ENCODE measurements at regions of chr10 and their contacts with region 1.

Region 1: DNA sequence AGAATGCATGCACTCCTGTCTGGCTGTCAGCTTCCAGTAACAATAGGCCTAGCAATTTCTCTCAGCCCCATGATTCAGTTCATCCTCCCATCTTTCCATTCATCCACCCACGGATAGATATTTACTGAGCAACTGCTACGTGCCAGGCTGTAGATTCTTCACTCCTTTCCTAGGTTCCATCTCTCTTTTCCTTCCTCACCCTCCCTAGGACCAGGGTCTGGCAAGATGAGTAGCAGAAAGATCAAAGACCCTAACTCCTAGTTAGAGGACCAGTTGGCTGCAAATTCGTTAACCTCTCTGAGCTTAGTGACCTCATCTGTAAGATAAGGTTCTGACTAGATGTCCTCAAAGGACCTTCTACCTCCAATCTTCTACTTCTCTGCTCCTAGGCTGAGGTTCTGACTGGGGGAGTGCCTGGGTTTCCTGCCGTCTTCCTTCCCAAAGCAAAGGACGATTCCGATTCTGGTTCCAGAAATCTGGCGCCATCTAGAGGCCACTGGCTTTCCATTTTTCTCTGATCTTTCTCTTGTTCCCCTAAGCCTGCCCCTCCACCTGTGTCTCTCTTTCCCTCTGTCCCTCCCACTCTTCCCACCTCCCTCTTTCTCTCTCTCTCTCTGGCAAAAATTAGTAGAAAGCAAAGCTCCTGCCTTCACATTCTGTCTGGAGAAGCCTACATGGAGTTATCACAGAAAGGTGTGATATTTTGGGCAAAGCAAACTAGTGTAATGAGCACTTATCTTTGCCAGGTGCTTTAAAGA is 26.2 kb downstream of the TBATA start:
- DNase-seq: peak; percentile 60
- ATAC-seq: peak; percentile 84
- H3K4me3 ChIP-seq: no peak overlapping the region
- H3K27ac ChIP-seq: no peak overlapping the region
- H3K4me1 ChIP-seq: peaks cover 23 to 53% of the 10 kb centered on the region in 2 experiments
- H3K27me3 ChIP-seq: no peaks in the 10 kb centered on the region
- CTCF ChIP-seq: peak; percentile 72 to 85 (median 76)
- POLR2A ChIP-seq: no peak
- RAD21 ChIP-seq: peak; percentile 93

Region 2: GRCh38 chr10:70549962-70550458 is 208.9 kb before region 1 on chr10:
- CTCF ChIA-PET with region 1: interaction called, 3 read pairs
- POLR2A ChIA-PET with region 1: no interaction called
- RAD21 ChIA-PET with region 1: interaction called in 1 of 2 experiments, 3 read pairs
- intact Hi-C with region 1: loop called (anchors 1 kb)
- DNase-seq: peak; percentile 42
- ATAC-seq: peak; percentile 89
- H3K4me3 ChIP-seq: no peak overlapping the region
- H3K27ac ChIP-seq: no peak overlapping the region
- H3K4me1 ChIP-seq: peaks cover 4 to 44% of the 10 kb centered on the region in 2 experiments; a peak in 3 of 4 replicates
- H3K27me3 ChIP-seq: no peaks in the 10 kb centered on the region
- CTCF ChIP-seq: peak; percentile 87 to 94 (median 89)
- POLR2A ChIP-seq: no peak
- RAD21 ChIP-seq: peak; percentile 97

Region 3: GRCh38 chr10:70558871-70559810 is 199.8 kb before region 1 on chr10:
- CTCF ChIA-PET with region 1: interaction called, 7 read pairs
- POLR2A ChIA-PET with region 1: no interaction called
- RAD21 ChIA-PET with region 1: no interaction called
- intact Hi-C with region 1: loop called (anchors 1 kb)
- DNase-seq: peak; percentile 65
- ATAC-seq: peak; percentile 92
- H3K4me3 ChIP-seq: peak overlapping the region; percentile 15 to 48
- H3K27ac ChIP-seq: peak overlapping the region; percentile 52
- H3K4me1 ChIP-seq: peaks cover 19 to 86% of the 10 kb centered on the region in 2 experiments
- H3K27me3 ChIP-seq: no peaks in the 10 kb centered on the region
- CTCF ChIP-seq: peak; percentile 51 to 90 (median 66)
- POLR2A ChIP-seq: no peak
- RAD21 ChIP-seq: peak; percentile 73

Region 4: GRCh38 chr10:70619271-70620019 is 139.5 kb before region 1 on chr10:
- CTCF ChIA-PET with region 1: no interaction called
- POLR2A ChIA-PET with region 1: no interaction called
- RAD21 ChIA-PET with region 1: interaction called in 1 of 2 experiments, 6 read pairs
- intact Hi-C with region 1: loop called (anchors 1 kb)
- DNase-seq: peak; percentile 64
- ATAC-seq: peak; percentile 70
- H3K4me3 ChIP-seq: no peak overlapping the region
- H3K27ac ChIP-seq: no peak overlapping the region
- H3K4me1 ChIP-seq: peaks cover 4 to 44% of the 10 kb centered on the region in 2 experiments; a peak in 3 of 4 replicates
- H3K27me3 ChIP-seq: no peaks in the 10 kb centered on the region
- CTCF ChIP-seq: peak; percentile 46 to 63 (median 58); a peak in 4 of 6 replicates
- POLR2A ChIP-seq: no peak
- RAD21 ChIP-seq: peak; percentile 85

Region 5: DNA sequence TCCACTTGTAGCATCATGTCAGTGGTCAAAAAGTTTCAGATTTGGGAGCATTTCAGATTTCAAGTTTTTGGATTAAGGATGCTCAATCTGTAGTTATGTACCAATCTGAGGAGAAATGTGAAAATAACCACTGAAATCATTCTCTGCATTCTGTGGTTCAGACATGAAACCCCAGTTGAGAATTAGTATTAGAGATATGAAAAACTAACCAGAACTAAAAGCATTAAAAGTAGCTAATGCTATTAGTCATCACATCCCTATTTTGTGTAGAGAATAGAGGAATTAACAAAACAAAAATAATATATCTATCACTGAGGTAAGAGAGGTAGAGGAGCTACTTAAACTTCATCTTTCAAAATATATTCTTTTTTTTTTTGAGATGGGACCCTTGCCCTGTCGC is 1839.0 kb after region 1 on chr10:
- CTCF ChIA-PET with region 1: no interaction called
- POLR2A ChIA-PET with region 1: no interaction called
- RAD21 ChIA-PET with region 1: no interaction called
- intact Hi-C with region 1: no loop called
- DNase-seq: no peak
- ATAC-seq: no peak
- H3K4me3 ChIP-seq: no peak overlapping the region
- H3K27ac ChIP-seq: no peak overlapping the region
- H3K4me1 ChIP-seq: no peaks in the 10 kb centered on the region
- H3K27me3 ChIP-seq: no peaks in the 10 kb centered on the region
- CTCF ChIP-seq: no peak
- POLR2A ChIP-seq: no peak
- RAD21 ChIP-seq: no peak